MCF 10A (cell line): ENCODE measurements at regions of chr19 and their contacts with region 1.

Region 1: DNA sequence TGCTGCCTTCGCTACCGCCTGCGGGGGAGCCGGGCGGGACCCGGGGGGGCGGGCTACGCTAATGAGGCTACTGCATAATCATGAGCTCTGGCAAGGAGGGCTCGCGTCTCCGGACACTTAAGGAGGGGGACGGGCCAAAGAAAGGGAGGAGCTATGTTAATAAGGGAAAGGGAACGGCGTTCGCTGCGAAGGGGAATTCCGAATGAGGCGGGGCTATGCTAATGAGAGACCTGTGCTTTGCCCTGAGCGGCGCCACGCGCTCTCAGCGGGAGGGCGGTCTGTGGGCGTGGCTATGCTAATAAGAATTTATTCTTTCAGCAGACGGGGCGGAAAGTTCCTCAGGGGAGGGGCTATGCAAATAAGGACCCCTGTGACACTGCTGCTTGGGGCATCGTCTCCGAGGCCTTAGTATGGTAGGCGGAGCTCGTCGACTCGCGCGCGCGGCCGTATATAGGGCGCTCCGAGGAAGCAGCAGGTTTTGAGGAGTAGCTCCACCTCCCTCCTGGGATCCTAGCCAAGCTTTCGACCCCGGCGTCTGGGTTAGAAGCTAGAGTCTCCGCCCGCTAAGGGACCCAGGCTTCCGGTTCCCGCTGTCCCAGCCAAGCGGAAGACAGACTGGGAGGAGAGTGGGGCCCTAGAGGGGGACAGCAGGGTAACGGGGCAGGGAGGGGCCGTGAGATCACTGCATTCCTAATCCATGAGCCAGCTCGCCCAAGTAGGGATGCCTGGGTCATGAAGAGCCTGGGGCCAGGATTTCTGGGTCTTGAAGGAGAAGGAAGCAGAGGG is at the start of gene RRAS:
- DNase-seq: peak; percentile 100
- H3K4me3 Mint-ChIP-seq: peak within 1 kb of the TSS; percentile 84
- H3K27ac Mint-ChIP-seq: peak within 1 kb of the TSS; percentile 100
- H3K4me1 Mint-ChIP-seq: peaks cover 44% of the 10 kb centered on the region
- H3K27me3 Mint-ChIP-seq: no peaks in the 10 kb centered on the region
- CTCF ChIP-seq: no peak
- total RNA-seq, gene RRAS: 37.6 and 56.5 TPM in 2 replicates

Region 2: GRCh38 chr19:49497047-49497788 is 143.1 kb before region 1 on chr19:
- CTCF ChIA-PET with region 1: no interaction called
- POLR2A ChIA-PET with region 1: interaction called, 42 read pairs
- intact Hi-C with region 1: loop called (anchors 1 kb)
- DNase-seq: peak; percentile 68
- H3K4me3 Mint-ChIP-seq: peak overlapping the region; percentile 91
- H3K27ac Mint-ChIP-seq: peak overlapping the region; percentile 97
- H3K4me1 Mint-ChIP-seq: peaks cover 6% of the 10 kb centered on the region
- H3K27me3 Mint-ChIP-seq: no peaks in the 10 kb centered on the region
- CTCF ChIP-seq: no peak

Region 3: GRCh38 chr19:49590071-49590970 is 50.0 kb before region 1 on chr19:
- CTCF ChIA-PET with region 1: interaction called, 3 read pairs
- POLR2A ChIA-PET with region 1: interaction called, 136 read pairs
- intact Hi-C with region 1: loop called (anchors 1 kb)
- DNase-seq: peak; percentile 99
- H3K4me3 Mint-ChIP-seq: peak overlapping the region; percentile 71
- H3K27ac Mint-ChIP-seq: peak overlapping the region; percentile 33
- H3K4me1 Mint-ChIP-seq: peaks cover 27% of the 10 kb centered on the region
- H3K27me3 Mint-ChIP-seq: no peaks in the 10 kb centered on the region
- CTCF ChIP-seq: no peak

Region 4: DNA sequence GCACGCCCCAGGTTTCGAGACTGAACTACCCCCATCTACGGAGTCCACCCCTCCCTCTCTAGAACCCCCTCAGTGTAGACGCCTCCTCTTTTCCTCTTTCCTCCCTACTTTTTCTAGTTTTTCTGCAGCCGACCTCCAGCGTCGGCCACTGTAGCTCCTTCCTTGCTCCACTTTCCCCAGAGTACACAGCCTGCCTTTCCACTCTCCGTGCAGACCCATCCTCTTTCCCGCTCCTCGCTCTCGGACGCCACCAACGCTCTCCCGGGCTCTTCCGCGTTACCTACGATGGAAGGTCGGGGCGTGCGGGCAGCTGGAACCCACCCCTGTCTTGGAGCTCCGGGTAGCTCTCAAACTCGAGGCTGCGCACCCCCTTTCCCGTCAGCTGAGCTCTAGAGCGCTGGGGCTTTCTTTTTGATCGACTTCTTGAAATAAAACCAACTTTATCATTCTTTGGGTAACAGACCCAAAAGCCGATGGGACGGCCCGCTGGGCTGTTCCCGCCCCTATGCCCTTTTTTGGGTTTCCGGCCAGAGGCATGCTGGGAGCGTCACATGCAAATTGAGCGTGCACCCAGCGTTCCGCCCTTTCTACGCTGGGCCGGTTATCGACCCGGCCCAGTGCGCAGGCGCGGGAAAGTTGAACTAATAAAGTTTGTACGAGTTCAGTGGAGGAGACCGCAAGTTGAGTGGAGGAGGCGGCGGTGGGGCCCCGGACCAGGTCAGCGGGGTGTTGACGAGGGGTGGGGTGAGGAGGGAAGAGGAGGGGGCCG is 25.2 kb after region 1 on chr19 and contains the starts of genes BCL2L12 and IRF3:
- CTCF ChIA-PET with region 1: interaction called, 3 read pairs
- POLR2A ChIA-PET with region 1: interaction called, 167 read pairs
- intact Hi-C with region 1: loop called (anchors 1 kb)
- DNase-seq: peak; percentile 98
- H3K4me3 Mint-ChIP-seq: peak within 1 kb of the TSS; percentile 91
- H3K27ac Mint-ChIP-seq: peak within 1 kb of the TSS; percentile 91
- H3K4me1 Mint-ChIP-seq: peaks cover 17% of the 10 kb centered on the region
- H3K27me3 Mint-ChIP-seq: no peaks in the 10 kb centered on the region
- CTCF ChIP-seq: no peak
- total RNA-seq, gene BCL2L12: 29.4 and 36.0 TPM in 2 replicates
- total RNA-seq, gene IRF3: 65.6 and 82.2 TPM in 2 replicates

Region 5: GRCh38 chr19:49690656-49691242 is 50.4 kb after region 1 on chr19 and contains the start of gene CPT1C:
- CTCF ChIA-PET with region 1: no interaction called
- POLR2A ChIA-PET with region 1: no interaction called
- intact Hi-C with region 1: no loop called
- DNase-seq: peak; percentile 52
- H3K4me3 Mint-ChIP-seq: peak within 1 kb of the TSS; percentile 56
- H3K27ac Mint-ChIP-seq: no peak within 1 kb of the TSS
- H3K4me1 Mint-ChIP-seq: peaks cover 14% of the 10 kb centered on the region
- H3K27me3 Mint-ChIP-seq: no peaks in the 10 kb centered on the region
- CTCF ChIP-seq: no peak
- total RNA-seq, gene CPT1C: not detected in 2 replicates

Region 6: DNA sequence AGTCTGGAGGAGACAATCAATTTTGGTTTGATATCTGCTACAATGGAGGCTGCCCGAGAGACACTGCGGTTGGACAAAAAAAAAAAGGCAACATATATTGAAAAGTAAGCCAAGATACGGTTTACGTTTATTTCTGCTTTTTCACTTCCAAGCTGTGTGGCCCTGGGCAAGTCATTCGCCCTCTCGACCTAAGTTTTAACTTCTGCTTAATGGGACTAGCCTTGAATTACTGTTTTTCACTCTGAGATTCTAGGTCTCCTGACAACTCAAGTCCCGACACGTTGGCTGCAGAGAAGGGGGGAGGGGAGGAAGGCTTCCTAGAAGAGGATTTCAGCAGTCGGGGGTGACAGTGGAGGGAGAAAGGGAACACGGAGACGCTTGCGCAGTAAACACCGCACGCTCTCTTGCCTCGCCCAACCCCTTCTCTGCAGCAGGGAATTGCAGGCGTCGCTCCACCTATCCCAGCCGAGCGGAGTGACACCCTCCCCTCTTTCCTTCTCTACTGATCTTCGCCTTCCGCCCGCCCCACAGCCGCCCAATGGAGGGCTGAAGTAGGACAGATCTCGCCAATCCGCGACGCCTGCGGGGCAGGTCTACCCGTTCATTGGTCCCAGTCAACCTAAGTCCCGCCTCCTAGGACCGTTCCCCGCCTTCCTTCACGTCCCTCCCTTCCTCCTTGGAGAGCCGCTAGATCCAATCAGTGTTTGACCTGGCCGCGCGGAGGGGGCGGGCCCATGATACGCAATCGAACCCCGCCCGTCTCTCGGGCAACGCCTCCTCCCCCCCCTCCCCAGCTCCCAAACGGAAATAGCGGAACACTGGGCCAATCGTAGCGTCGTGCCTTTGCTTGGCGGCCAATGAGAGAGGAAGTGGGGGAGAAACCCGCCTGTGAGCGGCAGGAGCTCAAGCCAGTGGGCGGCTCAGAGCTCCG is 126.0 kb after region 1 on chr19:
- CTCF ChIA-PET with region 1: interaction called, 3 read pairs
- POLR2A ChIA-PET with region 1: interaction called, 24 read pairs
- intact Hi-C with region 1: no loop called
- DNase-seq: peak; percentile 100
- H3K4me3 Mint-ChIP-seq: peak overlapping the region; percentile 90
- H3K27ac Mint-ChIP-seq: peak overlapping the region; percentile 99
- H3K4me1 Mint-ChIP-seq: peaks cover 19% of the 10 kb centered on the region
- H3K27me3 Mint-ChIP-seq: no peaks in the 10 kb centered on the region
- CTCF ChIP-seq: no peak

Region 7: DNA sequence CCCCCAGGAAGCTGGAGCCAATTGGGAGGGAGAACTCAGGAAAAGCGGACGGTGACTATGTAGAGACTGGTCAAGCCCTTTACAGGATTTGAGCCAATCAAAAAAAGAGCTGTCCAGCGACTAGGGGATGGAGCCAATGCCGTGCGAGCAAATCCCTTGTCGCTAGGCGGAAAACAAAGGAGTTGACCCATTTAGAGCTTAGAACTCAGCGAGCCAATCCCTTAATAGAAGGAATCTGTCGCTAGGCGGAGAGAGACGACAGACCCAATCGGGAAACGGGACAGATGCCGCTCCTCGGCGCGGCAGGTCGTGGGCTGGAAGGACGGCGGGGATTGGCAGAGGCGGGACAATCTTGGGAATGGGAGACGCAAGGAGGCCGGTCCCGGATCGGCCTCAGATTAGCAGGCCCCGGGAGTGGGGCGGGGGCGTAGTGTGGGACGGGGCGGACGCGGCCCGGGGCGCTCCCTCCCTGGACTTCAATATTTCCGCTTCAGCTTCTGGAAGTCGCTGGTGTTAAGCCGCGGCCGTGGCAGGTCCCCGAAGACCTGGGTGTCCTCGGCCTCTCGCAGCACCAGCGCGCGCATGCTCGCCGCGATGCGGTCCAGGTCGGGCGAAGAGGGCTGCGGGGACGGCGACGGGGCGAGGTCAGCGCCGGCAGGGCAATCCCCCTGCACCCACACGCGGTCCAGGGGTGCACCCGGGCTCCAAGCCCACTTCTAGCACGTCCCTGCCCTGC is 229.3 kb after region 1 on chr19:
- CTCF ChIA-PET with region 1: no interaction called
- POLR2A ChIA-PET with region 1: interaction called, 29 read pairs
- intact Hi-C with region 1: no loop called
- DNase-seq: peak; percentile 100
- H3K4me3 Mint-ChIP-seq: no peak overlapping the region
- H3K27ac Mint-ChIP-seq: no peak overlapping the region
- H3K4me1 Mint-ChIP-seq: peaks cover 5% of the 10 kb centered on the region
- H3K27me3 Mint-ChIP-seq: no peaks in the 10 kb centered on the region
- CTCF ChIP-seq: no peak